ENCODE measurements at regions of chr6 and their contacts with region 1.

Region 1: GRCh38 chr6:159203304-159204005 is 34.3 kb downstream of the FNDC1 start:
- DNase-seq: no peak
- H3K4me3 ChIP-seq: no peak overlapping the region
- H3K27ac ChIP-seq: no peak overlapping the region
- H3K4me1 ChIP-seq: no peaks in the 10 kb centered on the region
- H3K27me3 ChIP-seq: no peaks in the 10 kb centered on the region
- CTCF ChIP-seq: no peak
- EP300 ChIP-seq: no peak
- POLR2A ChIP-seq: no peak

Region 2: GRCh38 chr6:159074120-159074684 is 129.3 kb before region 1 on chr6:
- intact Hi-C with region 1: no loop called
- DNase-seq: no peak
- H3K4me3 ChIP-seq: no peak overlapping the region
- H3K27ac ChIP-seq: no peak overlapping the region
- H3K4me1 ChIP-seq: peaks cover 2% of the 10 kb centered on the region
- H3K27me3 ChIP-seq: no peaks in the 10 kb centered on the region
- CTCF ChIP-seq: no peak
- EP300 ChIP-seq: no peak
- POLR2A ChIP-seq: no peak

Region 3: DNA sequence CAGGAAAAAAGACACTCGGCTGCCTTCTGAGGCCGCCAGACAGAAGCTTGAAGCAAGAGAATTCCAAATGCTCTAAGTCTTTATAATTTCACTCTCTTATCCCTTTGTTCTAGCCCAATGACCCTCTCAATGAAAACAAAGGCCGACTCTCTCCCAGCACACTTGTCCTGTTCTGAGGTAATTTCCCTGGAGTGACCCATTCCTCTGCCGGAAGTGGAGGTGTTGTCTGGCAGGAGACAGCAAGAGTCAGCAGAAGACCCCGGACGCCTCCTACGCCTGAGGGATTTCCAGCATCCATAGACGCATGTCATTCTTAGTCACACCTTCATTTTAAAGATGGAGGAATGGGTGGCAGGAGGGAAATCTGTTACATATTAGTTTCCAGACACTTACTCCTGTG is 379.3 kb after region 1 on chr6:
- intact Hi-C with region 1: loop called in 1 of 4 experiments (anchors 5 kb)
- DNase-seq: no peak
- H3K4me3 ChIP-seq: no peak overlapping the region
- H3K27ac ChIP-seq: no peak overlapping the region
- H3K4me1 ChIP-seq: no peaks in the 10 kb centered on the region
- H3K27me3 ChIP-seq: no peaks in the 10 kb centered on the region
- CTCF ChIP-seq: no peak
- EP300 ChIP-seq: no peak
- POLR2A ChIP-seq: no peak

Region 4: DNA sequence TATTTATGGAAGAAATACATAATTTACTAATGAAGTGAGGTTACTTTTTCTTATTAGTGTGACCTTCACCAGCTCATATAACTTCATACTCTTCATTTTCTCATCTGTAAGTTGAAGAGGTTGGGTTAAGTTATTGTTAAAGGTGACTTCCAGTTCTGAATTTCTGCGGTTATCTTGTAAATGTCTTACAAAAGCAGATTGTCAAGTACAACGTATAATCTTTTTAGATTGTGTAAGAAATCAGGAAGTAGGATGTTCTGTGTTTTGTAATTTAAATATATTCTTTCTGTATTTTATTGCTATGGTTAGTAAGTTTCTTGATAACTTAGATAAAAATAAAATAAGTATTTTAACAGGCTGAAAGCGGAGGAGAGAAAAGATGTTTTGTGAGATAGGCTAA is 535.9 kb after region 1 on chr6:
- intact Hi-C with region 1: no loop called
- DNase-seq: no peak
- H3K4me3 ChIP-seq: no peak overlapping the region
- H3K27ac ChIP-seq: no peak overlapping the region
- H3K4me1 ChIP-seq: peaks cover 2% of the 10 kb centered on the region
- H3K27me3 ChIP-seq: no peaks in the 10 kb centered on the region
- CTCF ChIP-seq: no peak
- EP300 ChIP-seq: no peak
- POLR2A ChIP-seq: no peak